Activated T-helper 1 cell treated with anti-CD3 and anti-CD28 coated beads, Interleukin-12 subunit alpha, Interleukin-12 subunit beta, Interleukin-2, Interleukin-4 antibody, amounts not matched to agents 30 ng/mL and 10 ng/mL and 1 ng/mL, durations not matched to agents 14 hours and 24 hours and 36 hours (primary cell): ENCODE measurements at regions of chr21 and their contacts with region 1.

Region 1: DNA sequence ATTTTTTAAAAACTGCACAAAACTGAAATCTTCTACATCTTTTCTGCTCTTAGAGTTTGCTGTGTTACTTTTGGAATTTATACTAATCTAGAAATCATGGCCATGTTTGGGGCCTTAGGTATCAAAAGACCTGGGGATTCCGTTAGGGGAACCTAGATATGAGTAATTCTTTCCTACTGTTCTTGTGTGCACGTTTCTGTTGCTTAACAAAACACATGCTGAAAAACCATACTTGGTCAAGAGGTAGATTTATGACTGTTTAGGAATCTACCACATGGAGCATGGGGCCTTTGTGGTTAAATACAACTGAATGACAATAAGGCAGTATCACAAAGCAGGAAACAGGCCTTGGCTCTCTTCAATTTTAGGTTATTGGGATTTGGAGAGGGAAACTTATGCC is 291.9 kb upstream of the USP25 start:
- DNase-seq: no peak
- H3K4me3 Mint-ChIP-seq: no peak overlapping the region
- H3K27ac Mint-ChIP-seq: peak overlapping the region; percentile 34
- H3K4me1 Mint-ChIP-seq: peaks cover 12% of the 10 kb centered on the region
- H3K27me3 Mint-ChIP-seq: no peaks in the 10 kb centered on the region

Region 2: DNA sequence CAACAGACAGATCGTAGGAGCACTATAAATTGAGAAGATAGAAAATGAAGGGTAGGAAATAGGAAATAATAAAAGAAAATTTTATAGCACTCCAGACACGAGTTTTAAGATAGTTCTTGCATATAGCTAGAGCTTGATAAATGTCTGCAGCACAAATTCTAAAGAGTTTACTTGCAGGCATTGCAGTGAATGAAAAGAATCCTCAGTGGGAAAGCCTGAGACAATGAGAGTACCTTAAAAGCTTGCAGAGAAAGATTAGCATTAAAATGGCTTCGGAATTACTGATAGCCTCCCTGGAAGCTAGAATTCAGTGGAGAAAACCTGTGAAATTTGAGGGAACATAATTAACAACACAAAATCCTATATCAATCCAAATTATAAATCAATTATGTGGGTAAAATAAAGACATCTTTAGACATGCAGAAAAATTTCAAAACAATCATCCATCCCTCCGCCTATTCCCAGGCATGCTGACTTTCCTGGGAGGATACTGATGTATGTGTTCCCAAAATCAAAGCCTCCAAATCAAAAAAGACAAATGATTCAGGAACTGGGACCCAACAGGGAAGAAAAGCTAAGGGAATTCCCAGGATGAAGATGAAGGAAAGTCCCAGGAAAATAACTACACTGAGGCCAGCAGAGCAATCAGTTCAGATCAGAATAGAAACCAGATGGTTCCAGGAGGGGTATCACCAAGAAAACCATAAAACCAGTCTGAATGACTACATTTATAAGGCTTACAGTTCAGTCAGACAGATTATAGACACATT is 14.0 kb before region 1 on chr21:
- intact Hi-C with region 1: loop called (anchors 2 kb)
- DNase-seq: no peak
- H3K4me3 Mint-ChIP-seq: no peak overlapping the region
- H3K27ac Mint-ChIP-seq: no peak overlapping the region
- H3K4me1 Mint-ChIP-seq: peaks cover 16% of the 10 kb centered on the region
- H3K27me3 Mint-ChIP-seq: no peaks in the 10 kb centered on the region